CD4-positive, alpha-beta memory T cell (primary cell): ENCODE measurements at regions of chr6 and their contacts with region 1.

Region 1: DNA sequence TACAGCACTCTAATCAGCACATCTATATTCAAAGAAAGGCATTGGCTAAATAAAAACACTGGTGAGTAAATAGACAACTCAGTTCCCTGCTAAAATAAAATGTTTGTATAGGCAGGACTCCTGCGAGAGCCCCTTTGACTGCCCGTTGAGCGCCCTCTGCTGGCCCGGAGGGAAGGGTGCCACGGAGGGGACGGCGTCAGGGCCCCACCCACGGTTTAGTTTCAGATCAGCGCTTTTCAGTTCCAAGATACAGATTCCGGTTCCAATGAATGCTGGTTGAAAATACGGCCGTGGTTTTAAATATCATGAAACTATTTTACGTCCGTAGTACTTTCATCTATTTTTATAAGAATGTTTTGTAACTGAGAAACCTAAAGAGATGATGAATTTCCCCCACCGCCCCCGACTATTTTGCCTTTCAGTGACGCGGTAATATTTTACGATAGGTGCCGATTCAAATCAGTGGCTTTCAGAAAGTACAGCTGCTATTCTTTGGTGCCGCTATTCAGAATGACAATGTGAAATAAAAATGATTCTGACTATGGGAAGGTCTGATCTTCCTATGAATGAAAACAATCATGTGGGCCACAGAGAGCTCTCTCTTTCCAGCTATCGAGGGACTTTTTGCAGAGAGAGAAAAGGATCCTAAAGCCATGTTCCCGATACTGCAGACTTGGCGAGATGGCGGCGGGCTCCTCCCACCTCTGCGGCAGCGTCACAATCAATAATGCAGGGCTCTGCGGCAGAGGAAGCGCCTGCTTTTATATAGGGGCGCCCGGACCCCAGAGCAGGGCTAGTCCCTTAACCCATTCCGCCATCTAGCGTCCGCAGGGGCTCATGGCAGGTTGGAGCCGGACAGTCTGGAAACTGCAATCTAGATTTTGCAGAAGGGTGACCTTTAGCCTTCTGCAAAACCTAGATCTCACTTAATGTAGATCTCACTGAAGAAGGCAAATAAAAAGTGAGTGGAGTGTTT is 10.6 kb upstream of the CCN6 start:
- DNase-seq: peak; percentile 88 to 95 (median 89)
- H3K4me3 ChIP-seq: peak overlapping the region; percentile 96 to 99
- H3K4me3 Mint-ChIP-seq: peak overlapping the region; percentile 90 to 99 (median 96)
- H3K27ac ChIP-seq: peak overlapping the region; percentile 96
- H3K27ac Mint-ChIP-seq: peak overlapping the region; percentile 96 to 100 (median 99)
- H3K4me1 ChIP-seq: peaks cover 9% of the 10 kb centered on the region
- H3K4me1 Mint-ChIP-seq: peaks cover 12 to 35% (median 20%) of the 10 kb centered on the region in 4 donors
- H3K27me3 ChIP-seq: no peaks in the 10 kb centered on the region
- H3K27me3 Mint-ChIP-seq: no peaks in the 10 kb centered on the region

Region 2: DNA sequence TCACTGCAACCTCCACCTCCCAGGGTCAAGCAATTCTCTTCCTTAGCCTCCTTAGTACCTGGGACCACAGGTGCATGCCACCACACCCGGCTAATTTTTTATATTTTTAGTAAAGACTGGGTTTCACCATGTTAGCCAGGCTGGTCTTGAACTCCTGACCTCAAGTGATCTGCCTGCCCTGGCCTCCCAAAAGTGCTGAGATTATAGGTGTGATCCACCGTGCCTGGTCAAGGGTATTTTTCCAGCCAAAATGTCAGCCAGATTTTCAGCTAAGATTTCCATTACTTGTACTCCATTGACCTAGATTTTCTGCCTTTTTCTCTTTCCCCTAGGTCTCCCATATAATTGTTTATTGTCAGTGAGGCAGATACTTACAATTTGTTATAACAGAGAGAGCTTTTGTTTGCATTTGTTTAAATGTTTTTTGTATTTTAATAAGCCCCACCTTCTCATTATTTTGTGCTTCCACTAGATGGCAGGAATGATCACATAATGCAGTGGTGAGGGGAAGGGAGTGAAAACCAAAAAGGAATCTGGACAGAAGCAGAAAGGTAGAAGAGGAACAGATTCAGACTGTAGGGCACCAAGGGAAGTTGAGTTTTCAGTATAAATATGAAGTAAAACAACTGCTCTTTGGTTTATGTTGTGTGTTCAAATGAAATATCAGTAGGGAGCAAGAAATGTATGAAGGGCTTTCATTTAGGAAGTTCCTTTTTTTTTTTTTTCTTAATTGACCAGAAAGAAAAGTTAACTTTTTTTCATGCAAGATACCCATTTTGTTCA is 1031.8 kb before region 1 on chr6:
- CTCF ChIA-PET with region 1: interaction called, 5 read pairs
- POLR2A ChIA-PET with region 1: no interaction called
- intact Hi-C with region 1: loop called (anchors 1 kb)
- DNase-seq: peak in 4 of 5 donors; percentile 26 to 43 (median 35)
- H3K4me3 ChIP-seq: no peak overlapping the region
- H3K4me3 Mint-ChIP-seq: no peak overlapping the region
- H3K27ac ChIP-seq: no peak overlapping the region
- H3K27ac Mint-ChIP-seq: peak overlapping the region in 4 of 7 donors; percentile 0 to 17 (median 4)
- H3K4me1 ChIP-seq: no peaks in the 10 kb centered on the region
- H3K4me1 Mint-ChIP-seq: peaks cover 0 to 5% (median 4%) of the 10 kb centered on the region in 4 donors
- H3K27me3 ChIP-seq: no peaks in the 10 kb centered on the region
- H3K27me3 Mint-ChIP-seq: no peaks in the 10 kb centered on the region

Region 3: DNA sequence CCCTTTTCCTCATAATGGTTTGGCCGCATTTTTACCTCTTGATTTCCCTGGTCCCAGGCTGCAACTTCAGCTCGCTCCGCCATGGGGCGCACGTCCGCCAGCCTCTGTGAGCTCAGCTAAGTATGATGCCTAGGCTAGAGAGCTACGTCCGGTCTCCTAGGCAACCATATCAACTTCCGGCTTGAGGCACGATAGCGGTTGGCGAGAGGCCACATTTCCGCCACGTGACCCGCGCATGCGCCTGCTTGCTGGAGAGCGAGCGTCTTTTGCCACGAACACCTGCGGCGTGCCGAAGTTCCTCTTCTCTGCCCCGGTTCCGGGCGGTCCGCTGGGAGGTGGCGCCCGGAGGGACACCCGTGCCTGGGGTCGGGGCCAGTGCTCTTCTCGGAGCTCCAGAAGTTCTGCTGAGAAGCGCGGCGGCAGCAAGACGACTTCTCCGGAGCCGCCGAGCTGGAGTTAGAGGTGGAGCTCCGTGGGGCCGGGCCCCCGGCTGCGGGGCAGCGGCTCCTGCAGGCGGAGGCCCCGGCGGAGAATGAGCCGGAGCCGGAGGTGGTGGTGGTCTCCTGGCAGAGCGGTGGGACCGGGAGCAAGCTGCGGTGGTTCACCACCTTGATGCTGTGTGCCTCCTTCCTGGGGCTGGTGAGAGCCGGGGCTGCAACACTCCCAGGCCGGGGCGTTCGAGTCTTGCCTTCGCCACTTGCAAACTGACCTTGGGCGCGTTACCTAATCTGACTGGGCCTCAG is 784.1 kb before region 1 on chr6:
- CTCF ChIA-PET with region 1: interaction called, 82 read pairs
- POLR2A ChIA-PET with region 1: interaction called, 24 read pairs
- intact Hi-C with region 1: no loop called
- DNase-seq: peak; percentile 99
- H3K4me3 ChIP-seq: peak overlapping the region; percentile 42 to 71
- H3K4me3 Mint-ChIP-seq: peak overlapping the region; percentile 84 to 90 (median 87)
- H3K27ac ChIP-seq: peak overlapping the region; percentile 84
- H3K27ac Mint-ChIP-seq: peak overlapping the region; percentile 87 to 98 (median 96)
- H3K4me1 ChIP-seq: peaks cover 35% of the 10 kb centered on the region
- H3K4me1 Mint-ChIP-seq: peaks cover 16 to 34% (median 23%) of the 10 kb centered on the region in 4 donors
- H3K27me3 ChIP-seq: no peaks in the 10 kb centered on the region
- H3K27me3 Mint-ChIP-seq: peaks cover 3 to 4% of the 10 kb centered on the region in 2 donors

Region 4: GRCh38 chr6:111483736-111484632 is 559.3 kb before region 1 on chr6:
- CTCF ChIA-PET with region 1: interaction called, 11 read pairs
- POLR2A ChIA-PET with region 1: interaction called, 4 read pairs
- intact Hi-C with region 1: loop called (anchors 1 kb)
- DNase-seq: peak in 3 of 5 donors; percentile 89
- H3K4me3 ChIP-seq: peak overlapping the region; percentile 74
- H3K4me3 Mint-ChIP-seq: peak overlapping the region; percentile 91 to 99 (median 98)
- H3K27ac ChIP-seq: peak overlapping the region; percentile 80
- H3K27ac Mint-ChIP-seq: peak overlapping the region; percentile 97 to 100 (median 98)
- H3K4me1 ChIP-seq: peaks cover 57% of the 10 kb centered on the region
- H3K4me1 Mint-ChIP-seq: peaks cover 33 to 58% (median 45%) of the 10 kb centered on the region in 4 donors
- H3K27me3 ChIP-seq: no peaks in the 10 kb centered on the region
- H3K27me3 Mint-ChIP-seq: peaks cover 0 to 2% of the 10 kb centered on the region in 2 donors

Region 5: DNA sequence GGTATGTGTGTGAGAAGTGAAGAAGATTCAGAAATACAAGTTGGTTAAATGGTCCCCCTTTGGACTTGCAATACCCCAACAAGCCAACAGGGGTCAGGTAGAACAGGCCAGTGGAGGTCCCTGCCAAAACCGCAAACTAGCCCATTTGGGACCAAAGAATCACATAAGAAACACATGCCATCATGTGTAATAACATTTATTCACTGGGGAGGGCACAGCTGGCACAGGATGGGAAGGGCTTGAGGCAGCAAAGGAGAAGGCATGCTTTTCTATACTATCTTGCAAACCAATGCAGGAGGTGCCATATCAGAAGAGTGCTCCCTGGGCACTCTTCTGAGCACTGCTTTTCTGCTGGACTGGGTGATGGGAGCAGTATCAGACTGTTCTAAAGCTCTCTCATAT is 321.6 kb before region 1 on chr6:
- CTCF ChIA-PET with region 1: interaction called, 10 read pairs
- POLR2A ChIA-PET with region 1: no interaction called
- intact Hi-C with region 1: no loop called
- DNase-seq: peak; percentile 46 to 57 (median 50)
- H3K4me3 ChIP-seq: no peak overlapping the region
- H3K4me3 Mint-ChIP-seq: peak overlapping the region in 3 of 8 donors; percentile 17 to 81 (median 39)
- H3K27ac ChIP-seq: no peak overlapping the region
- H3K27ac Mint-ChIP-seq: peak overlapping the region; percentile 77 to 92 (median 88)
- H3K4me1 ChIP-seq: peaks cover 76% of the 10 kb centered on the region
- H3K4me1 Mint-ChIP-seq: peaks cover 61 to 84% (median 75%) of the 10 kb centered on the region in 4 donors
- H3K27me3 ChIP-seq: no peaks in the 10 kb centered on the region
- H3K27me3 Mint-ChIP-seq: no peaks in the 10 kb centered on the region

Region 6: DNA sequence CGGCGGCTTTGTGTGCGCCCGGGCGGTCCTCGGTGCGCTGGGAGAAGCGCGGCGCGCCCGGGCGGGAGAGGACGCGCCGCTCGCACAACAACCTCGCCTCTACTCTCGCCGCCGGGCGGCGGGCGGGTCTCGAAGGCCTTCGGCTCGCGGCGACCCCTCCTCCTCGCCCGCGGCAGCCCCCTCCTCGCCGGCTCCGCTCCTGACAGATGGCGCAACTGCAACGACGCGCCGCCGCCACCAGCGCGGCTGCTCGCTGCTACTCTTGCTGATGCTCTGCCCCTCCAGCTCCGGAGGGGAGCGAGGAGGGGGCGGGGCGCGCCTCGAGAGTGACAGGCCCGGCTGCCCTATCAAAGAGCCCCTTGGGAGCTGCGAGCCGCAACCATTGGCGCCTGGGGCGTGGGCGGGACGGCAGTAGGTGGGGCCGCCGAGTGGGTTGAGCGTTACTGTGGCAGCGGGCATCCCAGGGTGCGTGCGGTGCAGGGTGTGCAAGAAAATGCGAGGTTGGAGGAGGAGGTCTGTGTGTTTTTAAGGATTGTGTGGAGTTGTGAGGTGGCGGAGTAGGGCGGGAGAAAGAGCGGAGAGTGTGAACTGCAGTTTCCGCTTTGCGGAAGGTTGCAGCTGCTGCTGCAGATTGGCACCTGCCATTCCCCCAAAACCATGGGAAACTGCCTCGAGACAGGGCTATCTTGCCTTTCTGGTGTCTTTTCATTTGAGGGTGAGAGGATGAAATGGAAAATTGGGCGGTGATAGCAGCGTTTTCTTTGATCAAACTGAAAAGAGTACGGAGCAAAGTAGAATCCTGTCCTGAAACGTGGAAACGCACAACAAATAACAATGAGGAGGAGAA is 169.9 kb before region 1 on chr6 and contains the start of gene FYN:
- CTCF ChIA-PET with region 1: interaction called, 6 read pairs
- POLR2A ChIA-PET with region 1: interaction called, 4 read pairs
- intact Hi-C with region 1: loop called (anchors 1 kb)
- DNase-seq: peak; percentile 98
- H3K4me3 ChIP-seq: peak within 1 kb of the TSS; percentile 88 to 91
- H3K4me3 Mint-ChIP-seq: peak within 1 kb of the TSS; percentile 96 to 99 (median 98)
- H3K27ac ChIP-seq: peak within 1 kb of the TSS; percentile 88
- H3K27ac Mint-ChIP-seq: peak within 1 kb of the TSS; percentile 93 to 99 (median 98)
- H3K4me1 ChIP-seq: peaks cover 38% of the 10 kb centered on the region
- H3K4me1 Mint-ChIP-seq: peaks cover 27 to 55% (median 37%) of the 10 kb centered on the region in 4 donors
- H3K27me3 ChIP-seq: no peaks in the 10 kb centered on the region
- H3K27me3 Mint-ChIP-seq: no peaks in the 10 kb centered on the region
- total RNA-seq, gene FYN: 664 to 713 TPM

Region 7: GRCh38 chr6:112018619-112019416 is 24.5 kb before region 1 on chr6:
- CTCF ChIA-PET with region 1: interaction called, 619 read pairs
- POLR2A ChIA-PET with region 1: interaction called, 17 read pairs
- intact Hi-C with region 1: no loop called
- DNase-seq: no peak
- H3K4me3 ChIP-seq: no peak overlapping the region
- H3K4me3 Mint-ChIP-seq: no peak overlapping the region
- H3K27ac ChIP-seq: no peak overlapping the region
- H3K27ac Mint-ChIP-seq: peak overlapping the region in 2 of 7 donors; percentile 59 to 73
- H3K4me1 ChIP-seq: peaks cover 36% of the 10 kb centered on the region
- H3K4me1 Mint-ChIP-seq: peaks cover 21 to 56% (median 41%) of the 10 kb centered on the region in 4 donors
- H3K27me3 ChIP-seq: no peaks in the 10 kb centered on the region
- H3K27me3 Mint-ChIP-seq: no peaks in the 10 kb centered on the region